ENCODE measurements at regions of chr5 and their contacts with region 1.

Region 1: DNA sequence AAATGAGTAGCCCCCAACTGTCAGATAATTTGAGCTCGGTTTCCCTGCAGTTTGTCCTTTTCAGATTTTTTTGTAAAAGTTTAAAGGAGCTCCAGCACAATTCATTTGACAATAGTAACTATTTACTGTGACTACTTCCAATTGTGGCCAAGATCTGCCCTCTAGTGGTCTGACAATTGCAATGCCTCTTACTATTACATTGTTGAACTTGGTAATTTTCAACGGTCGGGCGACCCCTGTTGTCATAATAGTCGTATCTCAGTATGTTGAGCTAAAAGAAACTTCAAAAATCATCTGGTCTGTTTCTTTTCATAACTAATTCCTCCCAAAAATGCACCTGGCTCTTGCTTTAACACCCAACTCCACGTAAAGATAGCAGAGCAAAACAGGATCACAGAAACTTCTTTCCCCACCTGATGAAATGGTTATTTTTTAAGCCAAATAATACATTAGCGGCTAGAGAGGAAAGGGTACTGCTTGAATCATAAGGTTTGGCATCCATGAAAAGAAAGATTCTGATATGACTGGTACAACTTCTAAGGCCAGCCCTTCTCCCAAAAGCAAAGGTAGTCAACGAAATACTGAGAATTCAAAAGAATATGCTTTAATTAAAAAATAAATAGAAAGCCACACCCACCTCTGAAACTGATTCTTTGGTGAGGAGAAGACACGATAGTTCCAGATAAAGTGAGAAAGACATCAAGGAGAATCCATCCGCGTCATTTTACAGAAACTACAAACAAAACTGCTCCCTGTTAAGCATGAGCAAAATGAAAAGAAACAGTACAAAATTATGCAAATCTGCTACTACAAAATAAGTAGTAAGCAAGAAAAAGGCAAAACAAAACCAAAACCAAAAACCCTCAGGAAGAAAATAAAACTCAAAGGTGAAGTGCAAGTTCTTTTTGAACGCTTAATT is 76.9 kb upstream of the HTR4 start:
- DNase-seq: peak; percentile 72
- H3K4me3 ChIP-seq: no peak overlapping the region; the same call in 1 of the 2 replicates
- H3K27ac ChIP-seq: no peak overlapping the region
- H3K27me3 ChIP-seq: peaks cover 3% of the 10 kb centered on the region
- CTCF ChIP-seq: peak; percentile 84

Region 2: GRCh38 chr5:147857302-147858129 is 873.7 kb before region 1 on chr5:
- CTCF ChIA-PET with region 1: interaction called, 38 read pairs
- POLR2A ChIA-PET with region 1: no interaction called
- DNase-seq: peak; percentile 15
- H3K4me3 ChIP-seq: no peak overlapping the region
- H3K27ac ChIP-seq: no peak overlapping the region
- H3K27me3 ChIP-seq: no peaks in the 10 kb centered on the region
- CTCF ChIP-seq: peak; percentile 87

Region 3: DNA sequence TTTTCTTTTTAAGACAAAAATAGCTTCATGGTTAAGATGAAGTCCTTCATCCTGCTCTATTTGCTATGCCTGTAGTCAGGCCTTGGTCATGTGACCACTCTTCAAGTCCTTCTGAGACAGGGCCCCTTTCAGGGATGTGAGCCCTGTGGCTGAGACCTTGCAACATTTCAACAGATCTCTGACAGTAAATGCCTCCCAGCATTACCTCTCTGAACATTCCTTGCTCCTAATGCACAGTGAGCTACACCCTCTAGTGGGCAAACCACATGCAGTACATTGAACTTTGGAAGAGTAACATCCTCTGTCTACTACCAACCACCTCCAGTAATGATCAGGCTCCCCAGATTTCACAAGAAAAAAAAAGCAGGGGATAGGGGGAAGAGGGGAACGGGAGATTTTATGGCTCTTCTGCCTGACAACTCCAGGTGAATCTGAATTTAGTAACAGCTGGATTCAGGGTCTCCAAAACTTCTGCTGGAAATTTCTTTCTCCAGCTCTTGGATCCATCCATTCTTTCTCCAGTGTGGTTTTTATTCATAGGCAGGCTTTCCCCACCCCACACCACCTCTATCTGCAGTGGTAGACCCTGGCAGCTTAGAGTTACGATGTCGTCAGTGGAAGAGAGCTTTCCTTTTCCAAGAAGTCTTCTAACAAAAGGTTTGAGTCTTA is 356.4 kb before region 1 on chr5:
- CTCF ChIA-PET with region 1: interaction called, 18 read pairs
- POLR2A ChIA-PET with region 1: no interaction called
- DNase-seq: no peak
- H3K4me3 ChIP-seq: no peak overlapping the region
- H3K27ac ChIP-seq: no peak overlapping the region
- H3K27me3 ChIP-seq: no peaks in the 10 kb centered on the region
- CTCF ChIP-seq: peak; percentile 89

Region 4: GRCh38 chr5:148452499-148453193 is 278.6 kb before region 1 on chr5:
- CTCF ChIA-PET with region 1: interaction called, 380 read pairs
- POLR2A ChIA-PET with region 1: no interaction called
- DNase-seq: no peak
- H3K4me3 ChIP-seq: no peak overlapping the region
- H3K27ac ChIP-seq: no peak overlapping the region
- H3K27me3 ChIP-seq: peaks cover 8% of the 10 kb centered on the region
- CTCF ChIP-seq: no peak

Region 5: GRCh38 chr5:148791334-148791667 is 60.1 kb after region 1 on chr5:
- CTCF ChIA-PET with region 1: interaction called, 21 read pairs
- POLR2A ChIA-PET with region 1: no interaction called
- DNase-seq: no peak
- H3K4me3 ChIP-seq: no peak overlapping the region
- H3K27ac ChIP-seq: no peak overlapping the region
- H3K27me3 ChIP-seq: no peaks in the 10 kb centered on the region
- CTCF ChIP-seq: no peak

Region 6: DNA sequence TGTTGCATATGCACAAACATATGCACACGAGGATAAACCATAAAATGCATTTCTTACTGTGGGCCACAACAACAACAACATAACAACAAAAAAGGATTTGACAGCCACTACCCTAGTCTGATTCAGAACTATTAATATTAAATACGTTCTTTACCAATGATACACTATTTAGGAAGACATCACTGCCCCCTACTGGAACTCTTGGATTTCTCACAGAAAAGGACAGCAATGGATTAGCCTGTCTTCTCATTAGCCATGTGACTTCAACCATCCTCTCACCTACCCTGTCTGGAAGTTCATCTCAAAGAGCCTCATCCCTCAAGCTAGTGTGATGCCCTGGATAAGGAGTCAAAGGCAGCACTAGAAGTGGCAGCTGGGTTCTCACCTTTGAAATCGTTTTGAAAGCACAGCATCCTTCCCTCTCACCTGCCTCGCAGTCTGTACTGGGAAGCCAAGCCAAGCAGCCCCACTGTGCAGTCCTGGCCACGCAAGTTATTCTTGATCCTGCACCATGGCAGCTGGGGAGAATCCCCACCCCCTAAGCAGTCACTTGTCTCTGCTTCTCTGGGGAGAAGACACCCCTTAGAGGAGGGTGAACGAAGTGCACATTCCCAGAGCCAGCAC is 267.1 kb after region 1 on chr5:
- CTCF ChIA-PET with region 1: interaction called, 246 read pairs
- POLR2A ChIA-PET with region 1: no interaction called
- DNase-seq: no peak
- H3K4me3 ChIP-seq: no peak overlapping the region
- H3K27ac ChIP-seq: no peak overlapping the region
- H3K27me3 ChIP-seq: no peaks in the 10 kb centered on the region
- CTCF ChIP-seq: peak; percentile 69

Region 7: GRCh38 chr5:149062371-149063016 is 331.3 kb after region 1 on chr5:
- CTCF ChIA-PET with region 1: interaction called, 32 read pairs
- POLR2A ChIA-PET with region 1: no interaction called
- DNase-seq: no peak
- H3K4me3 ChIP-seq: no peak overlapping the region
- H3K27ac ChIP-seq: peak overlapping the region; percentile 75
- H3K27me3 ChIP-seq: no peaks in the 10 kb centered on the region
- CTCF ChIP-seq: no peak

Region 8: GRCh38 chr5:149422366-149423048 is 691.3 kb after region 1 on chr5:
- CTCF ChIA-PET with region 1: no interaction called
- POLR2A ChIA-PET with region 1: no interaction called
- DNase-seq: peak; percentile 95
- H3K4me3 ChIP-seq: peak overlapping the region; percentile 11
- H3K27ac ChIP-seq: peak overlapping the region; percentile 95
- H3K27me3 ChIP-seq: no peaks in the 10 kb centered on the region
- CTCF ChIP-seq: no peak

Measured in AG04450 (cell line).